ENCODE measurements at regions of chr22 and their contacts with region 1.

Region 1: GRCh38 chr22:20268279-20269012 is at the start of gene RTN4R:
- DNase-seq: peak; percentile 65
- H3K4me3 Mint-ChIP-seq: peak within 1 kb of the TSS; percentile 66
- H3K27ac Mint-ChIP-seq: no peak within 1 kb of the TSS
- H3K4me1 Mint-ChIP-seq: peaks cover 4% of the 10 kb centered on the region
- H3K27me3 Mint-ChIP-seq: no peaks in the 10 kb centered on the region
- total RNA-seq, gene RTN4R: 2.1 to 2.5 TPM

Region 2: DNA sequence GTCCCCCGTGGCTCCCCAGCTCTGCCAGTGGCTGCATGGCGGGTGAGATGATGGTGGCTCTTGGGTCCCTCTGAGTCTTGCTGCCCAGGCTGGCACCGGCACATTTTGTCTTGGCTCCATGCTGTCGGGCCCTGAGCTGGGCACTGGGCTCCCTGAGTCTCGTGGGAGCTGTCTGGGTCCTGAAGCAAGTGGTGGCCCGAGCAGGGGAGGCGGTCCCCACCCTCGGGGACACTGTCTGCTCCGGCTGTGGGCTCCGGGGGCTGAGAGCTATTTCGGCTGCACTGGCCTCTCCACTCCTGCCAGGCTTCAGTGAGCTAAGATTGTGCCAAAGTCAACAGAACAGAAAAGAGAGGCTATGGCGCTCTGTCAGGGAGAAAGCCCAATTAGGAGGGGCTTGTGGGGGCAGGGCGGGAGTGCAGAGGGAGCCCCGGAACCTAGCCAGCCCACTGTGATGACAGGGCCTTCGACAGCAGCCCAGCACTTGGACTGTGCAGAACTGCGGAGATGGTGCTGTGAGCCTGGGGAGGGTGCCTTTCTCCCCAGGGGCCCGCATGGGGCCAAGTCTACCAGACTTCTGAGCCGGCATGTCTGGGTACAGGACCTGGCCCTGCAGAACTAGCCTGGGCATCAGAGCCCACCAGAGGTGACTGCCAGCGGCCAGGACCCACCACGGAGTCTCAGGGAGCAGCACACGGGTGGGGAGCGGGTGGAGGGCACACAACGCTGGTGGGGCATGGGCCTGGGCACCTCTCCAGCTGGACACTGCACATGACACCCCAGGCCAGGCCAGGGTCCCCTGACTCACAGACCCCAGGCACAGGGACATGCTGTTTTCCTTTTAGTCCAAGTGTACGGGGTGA is 38.3 kb before region 1 on chr22:
- CTCF ChIA-PET with region 1: no interaction called
- intact Hi-C with region 1: loop called (anchors 5 kb)
- DNase-seq: no peak
- H3K4me3 Mint-ChIP-seq: no peak overlapping the region
- H3K27ac Mint-ChIP-seq: no peak overlapping the region
- H3K4me1 Mint-ChIP-seq: no peaks in the 10 kb centered on the region
- H3K27me3 Mint-ChIP-seq: no peaks in the 10 kb centered on the region

Region 3: GRCh38 chr22:20792947-20793294 is 524.5 kb after region 1 on chr22:
- CTCF ChIA-PET with region 1: no interaction called
- intact Hi-C with region 1: no loop called
- DNase-seq: no peak
- H3K4me3 Mint-ChIP-seq: no peak overlapping the region
- H3K27ac Mint-ChIP-seq: no peak overlapping the region
- H3K4me1 Mint-ChIP-seq: no peaks in the 10 kb centered on the region
- H3K27me3 Mint-ChIP-seq: no peaks in the 10 kb centered on the region